Calu3 (cell line): ENCODE measurements at regions of chr21 and their contacts with region 1.

Region 1: GRCh38 chr21:42724226-42724920 is 71.0 kb downstream of the PDE9A start:
- DNase-seq: peak; percentile 80
- H3K4me3 Mint-ChIP-seq: peak overlapping the region; percentile 21
- H3K27ac Mint-ChIP-seq: peak overlapping the region; percentile 77
- H3K4me1 Mint-ChIP-seq: peaks cover 47% of the 10 kb centered on the region
- H3K27me3 Mint-ChIP-seq: no peaks in the 10 kb centered on the region
- CTCF ChIP-seq: no peak

Region 2: GRCh38 chr21:42376338-42376982 is 347.9 kb before region 1 on chr21:
- CTCF ChIA-PET with region 1: no interaction called
- intact Hi-C with region 1: no loop called
- DNase-seq: no peak
- H3K4me3 Mint-ChIP-seq: no peak overlapping the region
- H3K27ac Mint-ChIP-seq: no peak overlapping the region
- H3K4me1 Mint-ChIP-seq: peaks cover 7% of the 10 kb centered on the region
- H3K27me3 Mint-ChIP-seq: no peaks in the 10 kb centered on the region
- CTCF ChIP-seq: no peak

Region 3: GRCh38 chr21:42734323-42734971 is 10.1 kb after region 1 on chr21:
- CTCF ChIA-PET with region 1: no interaction called
- intact Hi-C with region 1: loop called (anchors 2 kb)
- DNase-seq: no peak
- H3K4me3 Mint-ChIP-seq: peak overlapping the region; percentile 29
- H3K27ac Mint-ChIP-seq: peak overlapping the region; percentile 87
- H3K4me1 Mint-ChIP-seq: peaks cover 55% of the 10 kb centered on the region
- H3K27me3 Mint-ChIP-seq: no peaks in the 10 kb centered on the region
- CTCF ChIP-seq: no peak

Region 4: DNA sequence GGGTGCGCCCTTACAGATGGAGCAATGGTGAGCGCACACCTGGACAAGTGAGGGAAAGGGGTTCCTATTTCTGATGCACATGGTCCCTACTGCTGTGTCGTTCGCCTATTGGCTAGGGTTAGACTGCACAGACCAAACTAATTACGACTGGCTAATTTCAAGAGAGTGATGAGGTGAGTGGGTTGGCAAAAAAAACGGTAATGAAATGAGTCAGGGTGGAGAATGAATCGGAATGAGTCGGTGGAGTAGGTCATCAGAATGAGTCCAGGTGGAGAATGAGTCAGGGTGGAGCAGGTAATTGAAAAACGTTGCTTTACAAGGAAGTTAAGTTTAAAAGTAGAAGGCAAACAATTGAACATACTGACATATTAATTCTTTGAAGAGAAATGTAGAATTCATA is 75.1 kb after region 1 on chr21:
- CTCF ChIA-PET with region 1: no interaction called
- intact Hi-C with region 1: loop called (anchors 10 kb)
- DNase-seq: peak; percentile 11
- H3K4me3 Mint-ChIP-seq: no peak overlapping the region
- H3K27ac Mint-ChIP-seq: no peak overlapping the region
- H3K4me1 Mint-ChIP-seq: peaks cover 19% of the 10 kb centered on the region
- H3K27me3 Mint-ChIP-seq: peaks cover 1% of the 10 kb centered on the region
- CTCF ChIP-seq: no peak